ENCODE measurements at regions of chr18 and their contacts with region 1.

Region 1: DNA sequence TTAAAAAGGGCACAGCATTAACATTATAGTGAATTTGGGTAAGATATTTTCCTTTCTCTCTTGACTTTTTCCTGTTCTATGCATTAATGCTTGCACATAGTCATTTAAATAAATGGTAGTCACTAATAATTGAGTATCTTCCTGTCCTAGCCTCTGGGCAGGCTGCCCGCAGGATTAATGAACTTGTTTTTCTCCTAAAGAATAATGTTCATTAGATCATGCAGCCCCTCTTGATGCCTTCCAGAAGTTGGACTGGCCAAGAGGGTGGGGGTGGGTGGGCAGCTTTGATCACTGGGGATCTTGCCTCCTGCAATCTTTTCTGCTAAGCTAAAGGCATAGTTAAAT is 514.5 kb upstream of the CDH2 start:
- DNase-seq: peak; percentile 90
- H3K4me3 ChIP-seq: no peak overlapping the region
- H3K27ac ChIP-seq: peak overlapping the region; percentile 41
- H3K4me1 ChIP-seq: peaks cover 13% of the 10 kb centered on the region
- H3K27me3 ChIP-seq: no peaks in the 10 kb centered on the region
- CTCF ChIP-seq: no peak
- POLR2A ChIP-seq: no peak

Region 2: DNA sequence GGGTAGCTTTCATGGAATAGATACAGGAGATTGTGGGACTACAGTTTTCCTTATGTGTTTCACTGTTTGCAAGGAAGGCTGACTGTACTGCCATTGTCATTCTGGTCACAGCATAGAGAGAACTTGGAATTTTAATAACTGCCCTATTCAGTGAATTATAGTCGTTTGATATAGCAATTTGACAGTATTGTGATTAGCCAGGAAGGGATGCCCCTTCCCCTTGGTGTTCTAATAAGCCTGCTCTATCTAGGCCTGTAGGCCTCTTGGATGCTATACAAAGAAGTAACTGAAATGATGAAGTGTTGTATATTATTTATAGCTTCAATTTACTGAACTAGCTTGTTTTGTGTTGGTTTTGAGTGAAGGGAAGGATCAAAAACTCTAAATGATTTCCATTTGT is 14.0 kb after region 1 on chr18:
- CTCF ChIA-PET with region 1: interaction called, 12 read pairs
- POLR2A ChIA-PET with region 1: no interaction called
- dilution Hi-C with region 1: no loop called
- intact Hi-C with region 1: no loop called
- DNase-seq: no peak
- H3K4me3 ChIP-seq: no peak overlapping the region
- H3K27ac ChIP-seq: no peak overlapping the region
- H3K4me1 ChIP-seq: no peaks in the 10 kb centered on the region
- H3K27me3 ChIP-seq: no peaks in the 10 kb centered on the region
- CTCF ChIP-seq: no peak
- POLR2A ChIP-seq: no peak

Region 3: GRCh38 chr18:28961669-28962228 is 270.3 kb after region 1 on chr18:
- CTCF ChIA-PET with region 1: no interaction called
- POLR2A ChIA-PET with region 1: no interaction called
- dilution Hi-C with region 1: no loop called
- intact Hi-C with region 1: loop called (anchors 10 kb)
- DNase-seq: peak; percentile 43
- H3K4me3 ChIP-seq: no peak overlapping the region
- H3K27ac ChIP-seq: no peak overlapping the region
- H3K4me1 ChIP-seq: peaks cover 8% of the 10 kb centered on the region
- H3K27me3 ChIP-seq: no peaks in the 10 kb centered on the region
- CTCF ChIP-seq: peak; percentile 50 to 51
- POLR2A ChIP-seq: no peak